ENCODE measurements at regions of chr17 and their contacts with region 1.

Region 1: DNA sequence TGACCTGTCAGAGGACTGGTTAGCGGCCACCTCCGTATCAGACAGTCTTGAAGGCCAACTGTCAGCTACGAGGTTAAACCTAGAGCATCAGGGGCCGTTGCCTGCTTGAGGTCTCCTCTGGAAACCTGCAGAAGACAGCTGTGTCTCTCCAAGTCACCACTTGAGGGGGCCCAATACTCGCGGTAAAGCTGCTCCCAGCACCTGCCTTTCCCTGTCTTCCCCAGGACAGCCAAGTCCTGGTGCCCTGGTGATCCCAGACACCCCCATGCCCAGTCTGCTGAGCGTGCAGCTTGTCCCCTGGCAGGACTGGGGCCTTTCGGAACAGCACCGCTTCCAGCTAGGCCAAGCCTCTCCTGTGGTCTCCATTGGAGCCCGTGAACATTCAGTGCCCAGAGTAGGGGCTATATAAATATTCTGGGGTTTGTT is 80.1 kb downstream of the DNAH17 start:
- DNase-seq: peak; percentile 87
- H3K4me3 Mint-ChIP-seq: no peak overlapping the region
- H3K27ac Mint-ChIP-seq: no peak overlapping the region
- H3K4me1 Mint-ChIP-seq: peaks cover 2% of the 10 kb centered on the region
- H3K27me3 Mint-ChIP-seq: no peaks in the 10 kb centered on the region

Region 2: GRCh38 chr17:78674595-78675315 is 177.6 kb after region 1 on chr17:
- intact Hi-C with region 1: no loop called
- DNase-seq: no peak
- H3K4me3 Mint-ChIP-seq: no peak overlapping the region
- H3K27ac Mint-ChIP-seq: no peak overlapping the region
- H3K4me1 Mint-ChIP-seq: peaks cover 2% of the 10 kb centered on the region
- H3K27me3 Mint-ChIP-seq: no peaks in the 10 kb centered on the region

Region 3: DNA sequence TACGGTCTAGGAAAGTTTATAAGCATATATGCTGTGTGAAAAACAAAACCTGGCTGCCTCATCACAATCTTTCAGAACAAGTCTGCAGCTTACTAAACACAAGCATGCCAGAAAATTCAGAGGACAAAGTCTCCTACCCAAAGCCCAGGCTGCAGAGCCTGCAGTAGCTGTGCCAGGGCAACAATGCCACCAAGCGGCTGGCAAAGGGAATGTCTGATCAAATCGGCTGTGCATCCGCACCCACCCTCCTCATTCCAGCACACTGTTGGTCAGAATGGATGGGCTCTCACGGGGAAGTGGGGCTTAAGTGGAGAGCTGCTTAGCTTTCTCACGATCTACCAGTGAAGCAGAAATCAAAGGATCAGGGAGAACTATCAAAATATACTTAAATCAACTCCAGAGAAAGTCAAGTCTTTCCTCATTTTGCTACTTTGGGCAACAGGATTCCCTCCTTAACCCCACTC is 211.4 kb after region 1 on chr17:
- intact Hi-C with region 1: loop called (anchors 1 kb)
- DNase-seq: peak; percentile 85
- H3K4me3 Mint-ChIP-seq: peak overlapping the region; percentile 78
- H3K27ac Mint-ChIP-seq: peak overlapping the region; percentile 93
- H3K4me1 Mint-ChIP-seq: peaks cover 56% of the 10 kb centered on the region
- H3K27me3 Mint-ChIP-seq: no peaks in the 10 kb centered on the region

Region 4: DNA sequence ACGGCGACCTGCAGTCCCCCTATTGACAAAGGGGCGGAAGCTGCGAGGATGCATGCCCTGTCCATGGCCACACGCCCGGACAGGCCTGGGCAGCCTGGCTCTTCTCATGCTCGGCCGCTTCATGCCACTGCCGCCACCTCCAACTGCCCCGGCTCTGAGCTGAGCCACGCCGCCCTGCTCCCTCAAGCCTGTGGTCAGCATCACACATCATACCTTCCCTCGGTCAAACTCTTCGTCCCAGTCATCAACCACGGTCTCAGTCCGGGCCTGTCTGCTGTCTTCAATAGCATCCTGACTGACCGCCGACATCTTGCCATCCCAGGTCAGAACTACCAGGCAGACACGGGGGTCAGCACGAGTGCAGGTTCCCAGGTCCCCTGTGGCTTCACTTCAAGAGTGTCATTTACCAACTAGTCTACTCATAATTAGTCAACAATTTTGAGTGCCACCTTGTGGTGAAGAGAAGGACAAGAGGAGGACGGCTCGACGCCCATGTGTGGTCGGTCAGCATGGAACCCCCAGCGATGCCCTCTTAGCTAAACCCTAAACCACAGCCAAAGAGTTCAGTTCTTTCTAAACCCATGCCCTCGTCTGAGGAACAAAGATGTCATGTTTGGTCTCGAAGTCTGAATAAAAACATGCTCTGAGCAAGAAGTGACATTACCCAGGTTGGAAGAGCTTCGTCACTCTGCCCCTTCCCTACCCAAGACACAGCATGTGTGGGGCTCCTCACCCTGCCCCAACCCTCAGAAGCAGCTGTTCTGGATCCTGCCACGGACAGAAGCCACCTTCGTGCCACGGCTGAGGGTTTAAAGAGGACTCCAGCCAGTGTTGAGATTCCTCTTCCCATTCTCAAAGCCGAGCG is 301.8 kb after region 1 on chr17:
- intact Hi-C with region 1: loop called (anchors 1 kb)
- DNase-seq: peak; percentile 76
- H3K4me3 Mint-ChIP-seq: peak overlapping the region; percentile 48
- H3K27ac Mint-ChIP-seq: peak overlapping the region; percentile 89
- H3K4me1 Mint-ChIP-seq: peaks cover 43% of the 10 kb centered on the region
- H3K27me3 Mint-ChIP-seq: no peaks in the 10 kb centered on the region

Region 5: GRCh38 chr17:78840725-78841611 is 343.8 kb after region 1 on chr17 and contains the start of gene USP36:
- intact Hi-C with region 1: loop called (anchors 1 kb)
- DNase-seq: peak; percentile 100
- H3K4me3 Mint-ChIP-seq: peak within 1 kb of the TSS; percentile 87
- H3K27ac Mint-ChIP-seq: peak within 1 kb of the TSS; percentile 94
- H3K4me1 Mint-ChIP-seq: peaks cover 31% of the 10 kb centered on the region
- H3K27me3 Mint-ChIP-seq: no peaks in the 10 kb centered on the region
- total RNA-seq, gene USP36: 128 TPM in 2 replicates

Region 6: GRCh38 chr17:78970834-78971773 is 474.0 kb after region 1 on chr17:
- intact Hi-C with region 1: loop called (anchors 5 kb)
- DNase-seq: peak; percentile 92
- H3K4me3 Mint-ChIP-seq: no peak overlapping the region
- H3K27ac Mint-ChIP-seq: peak overlapping the region; percentile 78
- H3K4me1 Mint-ChIP-seq: peaks cover 10% of the 10 kb centered on the region
- H3K27me3 Mint-ChIP-seq: no peaks in the 10 kb centered on the region